Ascending aorta (tissue), 2 donors: ENCODE measurements at regions of chr6 and their contacts with region 1.

Region 1: GRCh38 chr6:35034411-35035191 is 106.5 kb downstream of the TCP11 start:
- DNase-seq: peak in 1 of 2 donors; percentile 83
- H3K4me3 ChIP-seq: peak overlapping the region; percentile 17 to 28
- H3K27ac ChIP-seq: peak overlapping the region; percentile 91 to 97
- H3K4me1 ChIP-seq: peaks cover 29 to 79% of the 10 kb centered on the region in 2 donors
- H3K27me3 ChIP-seq: no peaks in the 10 kb centered on the region
- CTCF ChIP-seq: no peak

Region 2: GRCh38 chr6:35048631-35049083 is 14.1 kb after region 1 on chr6:
- intact Hi-C with region 1: loop called (anchors 2 kb)
- DNase-seq: peak in 1 of 2 donors; percentile 40
- H3K4me3 ChIP-seq: peak overlapping the region; percentile 23 to 31
- H3K27ac ChIP-seq: peak overlapping the region; percentile 87 to 89
- H3K4me1 ChIP-seq: peaks cover 59 to 93% of the 10 kb centered on the region in 2 donors
- H3K27me3 ChIP-seq: no peaks in the 10 kb centered on the region
- CTCF ChIP-seq: peak in 2 of 3 experiments; percentile 30 to 56